ENCODE measurements at regions of chr20 and their contacts with region 1.

Region 1: DNA sequence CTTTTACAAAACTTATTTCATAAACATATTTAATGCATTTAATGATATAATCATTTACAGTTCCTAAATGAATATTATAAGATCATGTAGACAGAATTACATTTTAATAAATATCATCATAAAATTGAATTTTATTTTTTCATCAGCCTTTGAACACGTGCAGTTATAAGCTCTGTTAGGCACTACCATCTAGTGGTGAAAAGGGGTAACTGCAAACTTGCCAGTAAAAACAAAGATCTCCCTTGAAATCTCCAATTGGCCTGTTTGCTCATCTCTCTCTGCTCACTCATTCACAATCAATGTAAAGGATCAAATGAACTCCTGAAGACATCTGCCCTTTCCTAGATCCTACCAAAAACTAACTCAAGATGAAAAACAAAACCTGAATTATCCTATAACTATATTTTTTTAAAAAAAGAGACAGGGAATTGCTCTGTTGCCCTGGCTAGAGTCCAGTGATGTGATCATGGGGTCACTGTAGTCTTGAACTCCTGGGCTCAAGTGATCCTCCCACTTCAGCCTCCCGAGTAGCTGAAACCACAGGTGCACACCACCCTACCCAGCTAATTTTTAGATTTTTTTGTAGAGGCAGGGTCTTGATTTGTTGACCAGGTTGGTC is 31.7 kb downstream of the SAMHD1 start:
- DNase-seq: peak; percentile 13
- ATAC-seq: peak; percentile 79
- H3K4me3 ChIP-seq: no peak overlapping the region
- H3K27ac ChIP-seq: no peak overlapping the region
- H3K4me1 ChIP-seq: no peaks in the 10 kb centered on the region
- H3K27me3 ChIP-seq: no peaks in the 10 kb centered on the region
- CTCF ChIP-seq: peak; percentile 79 to 92 (median 81)
- EP300 ChIP-seq: no peak
- POLR2A ChIP-seq: no peak
- RAD21 ChIP-seq: peak; percentile 82

Region 2: GRCh38 chr20:36613974-36614373 is 305.9 kb before region 1 on chr20:
- CTCF ChIA-PET with region 1: interaction called, 8 read pairs
- POLR2A ChIA-PET with region 1: no interaction called
- RAD21 ChIA-PET with region 1: interaction called, 10 read pairs
- SMC1A ChIA-PET with region 1: interaction called, 5 read pairs
- in situ Hi-C with region 1: no loop called
- intact Hi-C with region 1: no loop called
- DNase-seq: no peak
- ATAC-seq: no peak
- H3K4me3 ChIP-seq: no peak overlapping the region
- H3K27ac ChIP-seq: no peak overlapping the region
- H3K4me1 ChIP-seq: no peaks in the 10 kb centered on the region
- H3K27me3 ChIP-seq: no peaks in the 10 kb centered on the region
- CTCF ChIP-seq: no peak
- EP300 ChIP-seq: no peak
- POLR2A ChIP-seq: peak; percentile 35; the same call in 1 of the 2 replicates
- RAD21 ChIP-seq: no peak

Region 3: GRCh38 chr20:36908603-36909002 is 11.2 kb before region 1 on chr20:
- CTCF ChIA-PET with region 1: interaction called, 13 read pairs
- POLR2A ChIA-PET with region 1: interaction called, 3 read pairs
- RAD21 ChIA-PET with region 1: no interaction called
- SMC1A ChIA-PET with region 1: interaction called, 8 read pairs
- in situ Hi-C with region 1: no loop called
- intact Hi-C with region 1: no loop called
- DNase-seq: peak; percentile 17
- ATAC-seq: peak; percentile 57
- H3K4me3 ChIP-seq: no peak overlapping the region
- H3K27ac ChIP-seq: peak overlapping the region; percentile 10; the same call in 1 of the 2 replicates
- H3K4me1 ChIP-seq: peaks cover 5% of the 10 kb centered on the region
- H3K27me3 ChIP-seq: no peaks in the 10 kb centered on the region
- CTCF ChIP-seq: no peak
- EP300 ChIP-seq: no peak
- POLR2A ChIP-seq: no peak
- RAD21 ChIP-seq: no peak

Region 4: DNA sequence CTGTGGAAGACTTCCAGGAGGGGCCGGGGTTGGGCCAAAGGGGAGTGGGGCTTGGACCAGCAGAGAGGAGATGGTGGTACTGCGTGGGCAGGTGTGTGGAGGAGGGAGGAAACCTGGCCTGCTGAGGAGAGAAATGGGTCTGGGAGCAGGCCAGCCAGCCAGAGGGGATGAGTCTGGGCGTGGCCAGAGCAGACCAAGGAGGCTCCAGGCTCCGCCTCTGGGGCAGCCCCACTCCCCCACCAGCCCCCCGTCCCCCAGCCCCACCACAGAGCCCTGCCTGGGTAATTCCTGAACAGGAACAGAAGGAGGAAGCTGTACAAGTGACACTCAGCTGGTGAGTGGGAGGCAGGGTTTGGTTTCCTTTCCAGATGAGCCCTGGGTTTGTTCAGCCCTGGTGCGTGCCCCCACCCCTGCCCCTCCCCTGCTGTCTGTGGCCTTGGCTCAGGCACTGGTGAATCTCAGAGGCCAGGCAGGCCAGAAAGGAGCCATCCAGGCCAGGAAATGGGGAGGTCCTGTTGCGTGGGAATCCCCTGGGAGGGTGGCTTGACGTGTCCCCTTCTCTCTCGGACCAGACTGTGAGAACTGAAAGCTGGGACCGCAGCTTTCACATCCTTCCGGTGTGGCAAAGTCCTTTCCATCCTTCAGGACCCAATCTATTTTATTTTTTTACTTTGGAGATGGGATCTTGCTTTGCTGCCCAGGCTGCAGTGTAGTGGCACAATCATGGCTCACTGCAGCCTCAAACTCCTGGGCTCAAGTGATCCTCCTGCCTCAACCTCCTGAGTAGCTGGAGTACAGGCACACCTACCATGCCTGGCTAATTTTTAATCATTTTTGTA is 416.8 kb after region 1 on chr20:
- CTCF ChIA-PET with region 1: no interaction called
- POLR2A ChIA-PET with region 1: no interaction called
- RAD21 ChIA-PET with region 1: no interaction called
- SMC1A ChIA-PET with region 1: no interaction called
- in situ Hi-C with region 1: no loop called
- intact Hi-C with region 1: no loop called
- DNase-seq: peak; percentile 94
- ATAC-seq: peak; percentile 88
- H3K4me3 ChIP-seq: peak overlapping the region; percentile 58; the same call in 1 of the 2 replicates
- H3K27ac ChIP-seq: peak overlapping the region; percentile 87
- H3K4me1 ChIP-seq: peaks cover 38% of the 10 kb centered on the region
- H3K27me3 ChIP-seq: no peaks in the 10 kb centered on the region
- CTCF ChIP-seq: no peak
- EP300 ChIP-seq: peak; percentile 66 to 81; a peak in 3 of 4 replicates
- POLR2A ChIP-seq: peak; percentile 41; the same call in 1 of the 2 replicates
- RAD21 ChIP-seq: no peak